Activated CD4-positive, alpha-beta T cell treated with anti-CD3 and anti-CD28 coated beads, Interleukin-2, amount 10 ng/mL, durations not matched to agents 7 days and 5 days (primary cell): ENCODE measurements at regions of chr17 and their contacts with region 1.

Region 1: GRCh38 chr17:77088455-77089123 is 52.2 kb upstream of the SEC14L1 start:
- DNase-seq: peak; percentile 91
- H3K4me3 Mint-ChIP-seq: peak overlapping the region; percentile 98
- H3K27ac Mint-ChIP-seq: peak overlapping the region; percentile 96
- H3K4me1 Mint-ChIP-seq: peaks cover 55% of the 10 kb centered on the region
- H3K27me3 Mint-ChIP-seq: peaks cover 1% of the 10 kb centered on the region

Region 2: DNA sequence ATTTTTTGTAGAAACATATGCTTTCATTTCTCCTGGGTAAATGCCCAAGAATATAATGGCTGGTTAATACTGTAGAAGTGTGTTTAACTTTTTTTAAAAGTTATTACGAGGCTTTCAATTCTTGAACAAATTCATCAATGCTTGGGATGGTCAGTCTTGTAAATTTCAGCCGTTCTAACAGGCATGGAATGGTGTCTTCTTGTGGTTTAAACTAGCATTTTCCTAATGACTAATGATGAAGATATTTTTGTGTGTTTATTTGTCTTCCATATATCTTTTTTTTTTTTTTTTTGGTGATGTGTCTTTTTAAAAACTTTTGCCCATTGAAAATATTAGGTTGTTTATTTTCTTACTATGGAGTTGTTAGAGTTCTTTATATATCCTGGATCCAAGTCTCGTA is 153.3 kb before region 1 on chr17:
- CTCF ChIA-PET with region 1: no interaction called
- POLR2A ChIA-PET with region 1: no interaction called
- DNase-seq: no peak
- H3K4me3 Mint-ChIP-seq: no peak overlapping the region
- H3K27ac Mint-ChIP-seq: no peak overlapping the region
- H3K4me1 Mint-ChIP-seq: no peaks in the 10 kb centered on the region
- H3K27me3 Mint-ChIP-seq: no peaks in the 10 kb centered on the region

Region 3: GRCh38 chr17:76957678-76958464 is 130.7 kb before region 1 on chr17:
- CTCF ChIA-PET with region 1: no interaction called
- POLR2A ChIA-PET with region 1: no interaction called
- DNase-seq: no peak
- H3K4me3 Mint-ChIP-seq: no peak overlapping the region
- H3K27ac Mint-ChIP-seq: no peak overlapping the region
- H3K4me1 Mint-ChIP-seq: no peaks in the 10 kb centered on the region
- H3K27me3 Mint-ChIP-seq: peaks cover 2% of the 10 kb centered on the region

Region 4: GRCh38 chr17:77098884-77099545 is 10.4 kb after region 1 on chr17:
- CTCF ChIA-PET with region 1: interaction called, 11 read pairs
- POLR2A ChIA-PET with region 1: no interaction called
- DNase-seq: no peak
- H3K4me3 Mint-ChIP-seq: no peak overlapping the region
- H3K27ac Mint-ChIP-seq: peak overlapping the region; percentile 21
- H3K4me1 Mint-ChIP-seq: peaks cover 32% of the 10 kb centered on the region
- H3K27me3 Mint-ChIP-seq: no peaks in the 10 kb centered on the region

Region 5: DNA sequence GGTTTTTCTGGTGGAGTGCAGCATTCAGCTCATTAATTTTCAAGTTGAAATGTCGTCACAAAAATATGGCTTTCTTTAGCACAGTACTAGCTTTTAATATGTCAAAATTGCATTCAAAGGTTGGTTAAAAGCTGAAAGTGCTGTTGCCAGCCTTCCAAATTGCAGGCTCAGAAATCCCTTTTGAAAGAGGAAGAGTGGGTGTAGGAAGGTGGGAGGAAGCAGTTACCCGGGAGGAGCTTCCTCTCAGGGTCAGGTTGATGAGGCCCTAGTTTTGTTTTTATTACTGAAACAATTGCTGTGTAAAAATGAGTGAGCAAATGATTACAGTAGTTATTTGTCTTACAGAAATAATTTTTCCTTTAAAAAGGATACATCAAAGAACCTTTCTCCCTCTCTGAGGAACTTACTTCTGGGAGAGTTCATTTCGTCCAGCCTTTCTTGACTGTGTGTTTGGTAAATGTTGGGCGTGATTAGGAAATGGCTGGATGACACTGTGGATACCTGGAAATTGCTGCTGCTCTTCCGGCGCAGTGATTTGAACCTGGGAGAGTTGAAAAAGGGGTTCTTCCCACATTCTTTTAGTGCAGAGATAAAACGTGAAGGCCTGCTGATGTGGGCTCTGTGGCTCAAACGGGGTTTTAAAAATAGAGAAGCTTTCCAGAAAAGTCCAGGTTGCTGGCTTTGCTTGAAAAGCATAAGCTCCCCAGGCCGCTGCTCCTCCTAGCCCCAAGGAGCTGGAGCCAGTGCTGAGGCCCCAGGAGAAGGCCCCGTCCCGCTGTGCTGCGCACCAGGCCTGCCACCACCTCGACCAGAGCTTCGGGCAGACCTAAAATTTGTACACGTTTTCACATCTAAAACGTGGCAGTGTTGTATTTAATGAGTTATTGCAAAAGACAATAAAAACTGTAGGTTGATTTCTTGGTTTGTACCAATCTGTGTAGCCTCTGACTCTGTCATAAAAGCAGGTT is 93.9 kb after region 1 on chr17:
- CTCF ChIA-PET with region 1: no interaction called
- POLR2A ChIA-PET with region 1: no interaction called
- DNase-seq: no peak
- H3K4me3 Mint-ChIP-seq: peak overlapping the region; percentile 50
- H3K27ac Mint-ChIP-seq: peak overlapping the region; percentile 81
- H3K4me1 Mint-ChIP-seq: peaks cover 29% of the 10 kb centered on the region
- H3K27me3 Mint-ChIP-seq: no peaks in the 10 kb centered on the region

Region 6: GRCh38 chr17:77247048-77247541 is 158.5 kb after region 1 on chr17:
- CTCF ChIA-PET with region 1: interaction called, 12 read pairs
- POLR2A ChIA-PET with region 1: interaction called, 3 read pairs
- DNase-seq: peak; percentile 87
- H3K4me3 Mint-ChIP-seq: peak overlapping the region; percentile 53
- H3K27ac Mint-ChIP-seq: peak overlapping the region; percentile 64
- H3K4me1 Mint-ChIP-seq: peaks cover 20% of the 10 kb centered on the region
- H3K27me3 Mint-ChIP-seq: peaks cover 27% of the 10 kb centered on the region